Upper lobe of right lung (tissue), 1 donor: ENCODE measurements at regions of chr19 and their contacts with region 1.

Region 1: DNA sequence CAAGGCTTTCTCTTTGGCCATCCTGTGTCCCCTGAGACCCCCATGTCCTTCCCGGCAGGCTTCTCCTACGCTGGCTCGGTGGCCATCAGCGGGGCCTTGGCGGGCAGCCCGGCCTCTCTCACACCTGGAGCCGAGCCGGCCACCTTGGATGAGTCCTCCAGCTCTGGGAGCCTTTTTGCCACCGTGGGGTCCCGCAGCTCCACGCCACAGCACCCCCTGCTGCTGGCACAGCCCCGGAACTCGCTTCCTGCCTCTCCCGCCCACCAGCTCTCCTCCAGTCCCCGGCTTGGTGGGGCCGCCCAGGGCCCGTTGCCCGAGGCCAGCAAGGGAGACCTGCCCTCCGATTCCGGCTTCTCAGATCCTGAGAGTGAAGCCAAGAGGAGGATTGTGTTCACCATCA is 14.2 kb downstream of the PLEKHJ1 start:
- DNase-seq: no peak
- ATAC-seq: no peak
- H3K4me3 ChIP-seq: no peak overlapping the region
- H3K27ac ChIP-seq: no peak overlapping the region
- H3K4me1 ChIP-seq: no peaks in the 10 kb centered on the region
- H3K27me3 ChIP-seq: no peaks in the 10 kb centered on the region
- CTCF ChIP-seq: peak; percentile 17

Region 2: DNA sequence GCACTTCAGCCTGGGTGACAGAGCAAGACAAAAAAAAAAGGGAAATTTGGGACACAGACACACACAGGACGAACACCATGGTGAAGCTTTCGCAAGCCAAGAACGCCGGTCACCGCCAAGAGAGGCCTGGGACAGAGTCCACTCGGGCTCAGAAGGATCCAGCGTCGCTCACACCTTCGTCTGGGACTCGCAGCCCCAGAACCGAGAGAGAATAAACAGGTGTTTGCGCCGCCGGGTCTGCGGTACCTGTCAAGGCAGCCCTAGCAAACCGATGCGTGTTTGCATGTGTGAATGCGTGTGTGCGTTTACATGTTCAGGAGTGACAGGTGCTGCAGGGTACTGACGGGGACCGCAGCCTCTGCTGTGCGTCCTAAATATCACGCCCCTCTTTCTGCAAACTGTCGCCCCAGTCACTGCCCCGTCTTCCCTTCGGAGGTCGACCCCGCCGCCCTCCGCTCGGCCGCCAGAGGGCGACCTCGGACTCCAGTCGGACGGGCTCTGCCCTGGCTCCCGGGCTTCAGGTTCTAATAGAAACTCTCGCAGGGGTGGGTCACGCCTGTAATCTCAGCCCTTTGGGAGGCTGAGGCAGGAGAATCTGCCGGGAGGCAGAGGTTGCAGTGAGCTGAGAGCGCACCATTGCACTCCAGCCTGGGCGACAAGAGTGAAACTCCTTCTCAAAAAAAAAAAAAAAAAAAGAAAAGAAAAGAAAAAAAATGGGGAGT is 292.7 kb before region 1 on chr19:
- intact Hi-C with region 1: no loop called
- DNase-seq: peak; percentile 91
- ATAC-seq: peak; percentile 95
- H3K4me3 ChIP-seq: peak overlapping the region; percentile 37
- H3K27ac ChIP-seq: no peak overlapping the region
- H3K4me1 ChIP-seq: peaks cover 8% of the 10 kb centered on the region
- H3K27me3 ChIP-seq: no peaks in the 10 kb centered on the region
- CTCF ChIP-seq: peak; percentile 93

Region 3: DNA sequence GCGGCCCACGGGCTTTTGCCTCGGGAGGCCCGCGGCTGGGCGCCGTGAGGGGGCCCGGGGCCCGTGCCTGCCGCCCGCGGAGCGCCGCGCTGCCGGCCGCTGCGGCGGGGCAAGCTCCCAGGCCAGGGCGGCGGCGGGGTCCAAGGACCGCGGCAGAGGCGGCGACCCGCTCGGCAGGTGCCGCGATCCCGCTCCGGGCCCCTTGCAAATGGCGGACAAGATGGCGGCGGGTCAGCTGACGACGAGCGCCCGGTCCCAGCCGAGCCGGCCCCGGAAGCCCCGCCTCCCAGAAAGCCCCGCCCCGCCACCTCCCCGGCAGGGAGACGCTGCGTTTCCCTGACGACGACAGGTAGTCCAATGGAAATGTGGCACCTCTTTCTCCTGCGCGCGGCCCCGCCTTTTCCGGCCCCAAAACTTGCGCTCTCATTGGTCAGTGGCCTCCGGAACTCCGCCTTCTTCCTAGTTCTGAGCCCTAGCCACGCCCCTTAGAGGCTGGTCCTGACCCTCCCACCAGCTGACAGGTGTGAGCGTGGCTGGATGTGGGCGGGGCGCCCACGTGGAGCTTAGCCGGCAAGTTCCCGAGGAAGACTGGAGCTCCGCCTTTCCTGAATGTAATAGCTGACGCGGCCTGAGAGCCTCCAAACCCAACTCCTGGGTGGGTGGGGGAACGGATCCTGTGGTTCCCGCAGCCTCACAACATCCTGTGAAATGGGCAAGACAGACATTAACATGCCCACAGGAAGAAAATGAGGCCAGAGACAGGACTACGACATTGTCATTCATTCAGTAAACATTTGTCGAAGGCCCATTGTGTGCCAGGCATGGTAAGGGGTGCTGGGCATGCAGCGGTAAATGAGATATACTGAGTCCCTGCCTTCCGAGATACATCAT is 70.3 kb before region 1 on chr19 and contains the start of gene AP3D1:
- intact Hi-C with region 1: loop called (anchors 10 kb)
- DNase-seq: peak; percentile 100
- ATAC-seq: peak; percentile 96
- H3K4me3 ChIP-seq: peak within 1 kb of the TSS; percentile 99
- H3K27ac ChIP-seq: peak within 1 kb of the TSS; percentile 85
- H3K4me1 ChIP-seq: peaks cover 31% of the 10 kb centered on the region
- H3K27me3 ChIP-seq: no peaks in the 10 kb centered on the region
- CTCF ChIP-seq: no peak
- total RNA-seq, gene AP3D1: 109 TPM